ENCODE measurements at regions of chr1 and their contacts with region 1.

Region 1: GRCh38 chr1:221435504-221435904 is 306.4 kb downstream of the DUSP10 start:
- DNase-seq: no peak
- H3K4me3 ChIP-seq: no peak overlapping the region
- H3K27ac ChIP-seq: no peak overlapping the region
- H3K4me1 ChIP-seq: peaks cover 0 to 4% (median 0%) of the 10 kb centered on the region in 4 experiments; a peak in 1 of 7 replicates
- H3K27me3 ChIP-seq: no peaks in the 10 kb centered on the region
- CTCF ChIP-seq: peak in 2 of 3 experiments; percentile 62 to 85; a peak in 2 of 4 replicates
- EP300 ChIP-seq: no peak
- POLR2A ChIP-seq: no peak
- RAD21 ChIP-seq: peak; percentile 82 to 86

Region 2: GRCh38 chr1:220873868-220874655 is 561.4 kb before region 1 on chr1:
- CTCF ChIA-PET with region 1: interaction called, 13 read pairs
- POLR2A ChIA-PET with region 1: no interaction called
- DNase-seq: peak in 1 of 2 experiments; percentile 74
- H3K4me3 ChIP-seq: no peak overlapping the region
- H3K27ac ChIP-seq: no peak overlapping the region
- H3K4me1 ChIP-seq: peaks cover 3 to 11% (median 7%) of the 10 kb centered on the region in 4 experiments
- H3K27me3 ChIP-seq: peaks cover 37 to 49% (median 45%) of the 10 kb centered on the region in 4 experiments
- CTCF ChIP-seq: peak; percentile 41 to 75 (median 73)
- EP300 ChIP-seq: no peak
- POLR2A ChIP-seq: no peak
- RAD21 ChIP-seq: peak; percentile 86 to 91

Region 3: DNA sequence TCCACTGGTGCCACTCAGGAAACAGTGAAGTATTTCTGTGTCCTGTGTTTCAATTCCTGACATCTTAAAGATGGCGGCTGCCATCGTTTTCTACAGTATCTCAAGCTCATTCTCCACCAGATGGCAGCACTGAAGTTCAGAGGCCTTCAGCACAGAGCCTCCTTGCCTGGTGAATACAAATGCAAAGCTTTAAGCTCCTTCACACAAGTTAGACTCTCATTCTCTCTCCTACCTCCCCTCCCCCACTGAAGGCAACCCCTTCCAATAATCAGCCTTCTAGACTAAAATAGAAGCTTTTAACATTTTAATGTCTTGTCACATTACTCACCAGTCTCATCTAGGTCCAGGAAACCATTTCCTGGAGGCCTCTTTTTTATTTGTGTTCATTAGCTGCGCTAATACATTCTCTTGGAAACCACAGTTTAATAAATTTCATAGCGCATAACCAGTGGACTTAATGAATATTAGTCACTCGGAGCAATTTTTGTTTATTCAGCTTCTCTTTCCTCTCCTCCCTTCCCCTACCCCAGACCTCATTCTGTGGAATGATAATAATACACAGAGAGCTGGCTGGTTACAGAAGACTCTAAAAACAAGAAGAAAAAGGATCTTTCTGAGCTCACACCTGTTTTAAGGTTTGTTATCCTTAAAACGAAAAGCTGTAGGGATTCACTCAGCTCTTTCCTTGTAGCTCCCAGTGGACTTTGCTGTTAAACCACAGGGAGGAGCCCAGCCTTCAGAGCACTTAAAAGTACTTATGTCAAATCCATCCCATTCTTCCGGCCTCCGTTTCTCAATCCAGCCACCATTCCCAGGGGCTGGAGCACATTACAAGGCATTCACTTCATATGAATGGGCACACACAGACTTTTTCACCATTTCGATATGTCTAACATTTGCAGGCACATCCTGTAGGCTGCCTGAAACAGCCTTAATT is 171.4 kb before region 1 on chr1:
- CTCF ChIA-PET with region 1: interaction called, 66 read pairs
- POLR2A ChIA-PET with region 1: no interaction called
- DNase-seq: peak; percentile 9 to 57
- H3K4me3 ChIP-seq: no peak overlapping the region
- H3K27ac ChIP-seq: no peak overlapping the region
- H3K4me1 ChIP-seq: peaks cover 0 to 2% (median 0%) of the 10 kb centered on the region in 4 experiments; a peak in 1 of 7 replicates
- H3K27me3 ChIP-seq: no peaks in the 10 kb centered on the region
- CTCF ChIP-seq: peak in 2 of 3 experiments; percentile 64 to 68; a peak in 3 of 4 replicates
- EP300 ChIP-seq: no peak
- POLR2A ChIP-seq: no peak
- RAD21 ChIP-seq: peak; percentile 71 to 72

Region 4: GRCh38 chr1:221415626-221416025 is 19.9 kb before region 1 on chr1:
- CTCF ChIA-PET with region 1: interaction called, 10 read pairs
- POLR2A ChIA-PET with region 1: no interaction called
- DNase-seq: no peak
- H3K4me3 ChIP-seq: no peak overlapping the region
- H3K27ac ChIP-seq: no peak overlapping the region
- H3K4me1 ChIP-seq: no peaks in the 10 kb centered on the region
- H3K27me3 ChIP-seq: no peaks in the 10 kb centered on the region
- CTCF ChIP-seq: no peak
- EP300 ChIP-seq: no peak
- POLR2A ChIP-seq: no peak
- RAD21 ChIP-seq: no peak

Region 5: DNA sequence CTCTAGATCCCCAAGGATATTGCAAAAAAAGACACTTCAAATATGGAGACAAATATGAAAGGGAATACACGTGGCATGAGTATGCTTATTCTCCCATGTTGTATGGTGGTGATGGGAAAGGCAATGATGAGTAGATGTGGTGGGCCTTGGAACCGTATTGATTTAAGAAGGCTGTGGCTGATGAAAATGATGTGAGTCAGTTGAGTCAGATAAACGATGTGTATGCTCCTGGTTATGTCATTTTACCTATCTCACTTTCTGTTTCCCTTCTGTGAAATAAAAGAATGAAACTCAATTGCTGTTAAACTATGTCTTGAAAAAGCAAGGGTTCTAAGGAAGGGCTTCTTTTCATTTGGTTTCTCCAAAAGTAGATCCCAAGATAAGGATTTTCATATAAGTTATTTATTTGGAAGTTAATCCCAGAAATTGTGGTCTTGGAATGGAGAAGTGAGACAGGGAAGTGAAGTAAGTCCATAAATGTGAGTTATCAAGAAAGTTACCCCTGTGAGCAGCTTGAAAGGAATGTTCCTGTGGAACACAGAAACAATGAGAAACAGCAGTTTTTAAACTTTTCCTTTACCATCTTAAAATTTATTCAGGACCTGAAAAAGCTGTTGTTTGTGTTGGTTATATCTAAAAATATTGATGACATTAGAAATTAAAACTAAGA is 14.4 kb after region 1 on chr1:
- CTCF ChIA-PET with region 1: interaction called, 15 read pairs
- POLR2A ChIA-PET with region 1: no interaction called
- DNase-seq: no peak
- H3K4me3 ChIP-seq: no peak overlapping the region
- H3K27ac ChIP-seq: no peak overlapping the region
- H3K4me1 ChIP-seq: no peaks in the 10 kb centered on the region
- H3K27me3 ChIP-seq: no peaks in the 10 kb centered on the region
- CTCF ChIP-seq: no peak
- EP300 ChIP-seq: no peak
- POLR2A ChIP-seq: no peak
- RAD21 ChIP-seq: no peak

Region 6: GRCh38 chr1:221594576-221594975 is 159.1 kb after region 1 on chr1:
- CTCF ChIA-PET with region 1: no interaction called
- POLR2A ChIA-PET with region 1: no interaction called
- DNase-seq: no peak
- H3K4me3 ChIP-seq: no peak overlapping the region
- H3K27ac ChIP-seq: no peak overlapping the region
- H3K4me1 ChIP-seq: no peaks in the 10 kb centered on the region
- H3K27me3 ChIP-seq: no peaks in the 10 kb centered on the region
- CTCF ChIP-seq: no peak
- EP300 ChIP-seq: no peak
- POLR2A ChIP-seq: no peak
- RAD21 ChIP-seq: no peak